ENCODE measurements at regions of chr22 and their contacts with region 1.

Region 1: GRCh38 chr22:37032546-37033460 is 13.3 kb downstream of the MPST start:
- DNase-seq: no peak
- H3K4me3 ChIP-seq: no peak overlapping the region
- H3K27me3 ChIP-seq: peaks cover 6% of the 10 kb centered on the region
- CTCF ChIP-seq: no peak

Region 2: DNA sequence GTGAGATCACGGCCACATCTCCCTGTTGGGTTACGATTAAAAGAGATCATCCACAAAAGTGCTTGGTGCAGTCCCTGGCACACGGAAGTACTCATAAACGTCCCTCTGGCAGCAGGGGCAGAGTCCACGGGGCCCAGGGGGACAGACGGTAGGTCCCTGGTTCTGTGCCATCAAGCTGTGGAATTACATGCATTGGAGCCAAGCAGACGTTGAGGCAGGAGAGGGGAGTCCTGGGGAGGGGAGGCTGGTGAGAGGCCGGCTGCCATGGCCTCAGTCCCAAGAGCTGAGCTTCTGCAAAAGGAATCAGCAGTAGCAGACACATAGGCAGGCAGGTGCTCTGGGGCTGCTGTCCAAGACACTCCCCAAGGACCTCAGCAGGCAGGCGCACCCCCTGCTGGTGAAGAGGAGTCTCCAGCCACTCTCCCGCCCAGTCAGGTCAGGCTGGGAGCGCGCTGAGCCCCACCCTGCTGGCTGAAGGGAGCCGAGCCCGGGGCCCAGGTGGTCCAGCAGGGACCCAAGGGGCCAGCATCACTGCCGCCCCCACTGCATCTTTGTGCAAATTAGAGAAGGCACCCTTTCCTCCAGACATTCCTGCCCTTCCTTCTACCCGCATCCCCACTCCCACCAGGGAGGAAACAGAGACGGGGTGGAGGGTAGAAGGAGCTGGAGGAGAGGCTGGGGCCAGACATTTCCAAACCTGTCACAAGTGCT is 11.2 kb after region 1 on chr22:
- CTCF ChIA-PET with region 1: interaction called, 12 read pairs
- POLR2A ChIA-PET with region 1: no interaction called
- DNase-seq: no peak
- H3K4me3 ChIP-seq: no peak overlapping the region
- H3K27me3 ChIP-seq: no peaks in the 10 kb centered on the region
- CTCF ChIP-seq: peak; percentile 63

Region 3: GRCh38 chr22:37063431-37064420 is 30.9 kb after region 1 on chr22:
- CTCF ChIA-PET with region 1: no interaction called
- POLR2A ChIA-PET with region 1: no interaction called
- DNase-seq: no peak
- H3K4me3 ChIP-seq: no peak overlapping the region
- H3K27me3 ChIP-seq: peaks cover 8% of the 10 kb centered on the region
- CTCF ChIP-seq: no peak